Thyroid gland (tissue), 4 donors: ENCODE measurements at regions of chr2 and their contacts with region 1.

Region 1: GRCh38 chr2:99819766-99820165 is 322.6 kb downstream of the AFF3 start:
- DNase-seq: peak; percentile 16 to 17
- H3K4me3 ChIP-seq: no peak overlapping the region
- H3K27ac ChIP-seq: no peak overlapping the region
- H3K4me1 ChIP-seq: no peaks in the 10 kb centered on the region
- H3K27me3 ChIP-seq: no peaks in the 10 kb centered on the region
- CTCF ChIP-seq: peak in 2 of 6 experiments; percentile 12 to 32
- POLR2A ChIP-seq: no peak

Region 2: GRCh38 chr2:99710721-99711120 is 109.0 kb before region 1 on chr2:
- intact Hi-C with region 1: no loop called
- DNase-seq: no peak
- H3K4me3 ChIP-seq: no peak overlapping the region
- H3K27ac ChIP-seq: no peak overlapping the region
- H3K4me1 ChIP-seq: no peaks in the 10 kb centered on the region
- H3K27me3 ChIP-seq: no peaks in the 10 kb centered on the region
- CTCF ChIP-seq: no peak
- POLR2A ChIP-seq: no peak

Region 3: DNA sequence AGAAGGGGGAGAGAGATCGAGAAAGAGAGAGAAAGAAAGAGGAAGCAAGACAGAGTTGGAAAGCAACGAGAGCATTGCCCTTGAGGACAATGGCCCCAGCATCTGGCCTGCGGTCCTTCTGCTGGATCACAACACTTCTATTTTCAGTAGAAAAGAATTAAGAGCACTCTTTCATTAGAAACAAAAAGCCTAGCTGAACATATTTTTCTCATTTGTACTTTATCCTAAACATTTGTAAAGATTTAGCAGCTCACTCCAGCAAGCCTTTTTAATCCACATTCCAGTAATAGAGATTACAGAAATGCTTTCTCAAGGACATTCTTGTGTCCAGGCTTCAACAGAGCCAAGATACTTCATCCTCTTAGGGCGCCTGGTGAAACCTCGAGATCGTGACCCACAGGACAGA is 354.3 kb after region 1 on chr2:
- intact Hi-C with region 1: no loop called
- DNase-seq: no peak
- H3K4me3 ChIP-seq: no peak overlapping the region
- H3K27ac ChIP-seq: no peak overlapping the region
- H3K4me1 ChIP-seq: no peaks in the 10 kb centered on the region
- H3K27me3 ChIP-seq: no peaks in the 10 kb centered on the region
- CTCF ChIP-seq: no peak
- POLR2A ChIP-seq: no peak

Region 4: GRCh38 chr2:100242891-100243619 is 423.3 kb after region 1 on chr2:
- intact Hi-C with region 1: loop called (anchors 10 kb)
- DNase-seq: peak; percentile 73 to 79
- H3K4me3 ChIP-seq: no peak overlapping the region
- H3K27ac ChIP-seq: no peak overlapping the region
- H3K4me1 ChIP-seq: no peaks in the 10 kb centered on the region
- H3K27me3 ChIP-seq: no peaks in the 10 kb centered on the region
- CTCF ChIP-seq: peak in 5 of 6 experiments; percentile 39 to 84 (median 79)
- POLR2A ChIP-seq: no peak